AG04450 (cell line): ENCODE measurements at regions of chrX and their contacts with region 1.

Region 1: GRCh38 chrX:153507484-153508178 is 9.8 kb upstream of the ATP2B3 start:
- DNase-seq: peak; percentile 30
- H3K4me3 ChIP-seq: no peak overlapping the region
- H3K27ac ChIP-seq: no peak overlapping the region
- H3K27me3 ChIP-seq: no peaks in the 10 kb centered on the region
- CTCF ChIP-seq: peak; percentile 65

Region 2: GRCh38 chrX:153032397-153033118 is 475.1 kb before region 1 on chrX:
- CTCF ChIA-PET with region 1: interaction called, 14 read pairs
- POLR2A ChIA-PET with region 1: no interaction called
- DNase-seq: no peak
- H3K4me3 ChIP-seq: peak overlapping the region; percentile 13; the same call in 1 of the 2 replicates
- H3K27ac ChIP-seq: no peak overlapping the region
- H3K27me3 ChIP-seq: no peaks in the 10 kb centered on the region
- CTCF ChIP-seq: peak; percentile 66

Region 3: GRCh38 chrX:153438531-153438930 is 69.1 kb before region 1 on chrX:
- CTCF ChIA-PET with region 1: no interaction called
- POLR2A ChIA-PET with region 1: no interaction called
- DNase-seq: no peak
- H3K4me3 ChIP-seq: no peak overlapping the region
- H3K27ac ChIP-seq: no peak overlapping the region
- H3K27me3 ChIP-seq: no peaks in the 10 kb centered on the region
- CTCF ChIP-seq: peak; percentile 46

Region 4: GRCh38 chrX:153460845-153461244 is 46.8 kb before region 1 on chrX:
- CTCF ChIA-PET with region 1: interaction called, 45 read pairs
- POLR2A ChIA-PET with region 1: no interaction called
- DNase-seq: no peak
- H3K4me3 ChIP-seq: no peak overlapping the region
- H3K27ac ChIP-seq: no peak overlapping the region
- H3K27me3 ChIP-seq: no peaks in the 10 kb centered on the region
- CTCF ChIP-seq: peak; percentile 63

Region 5: GRCh38 chrX:153470435-153471363 is 36.9 kb before region 1 on chrX and contains the start of gene HAUS7:
- CTCF ChIA-PET with region 1: interaction called, 62 read pairs
- POLR2A ChIA-PET with region 1: interaction called, 4 read pairs
- DNase-seq: peak; percentile 70
- H3K4me3 ChIP-seq: peak within 1 kb of the TSS; percentile 67
- H3K27ac ChIP-seq: no peak within 1 kb of the TSS
- H3K27me3 ChIP-seq: no peaks in the 10 kb centered on the region
- CTCF ChIP-seq: peak; percentile 69
- polyA plus RNA-seq, gene HAUS7: 13.2 and 16.5 TPM in 2 replicates

Region 6: GRCh38 chrX:153494541-153495361 is 12.9 kb before region 1 on chrX and contains the start of gene BGN:
- CTCF ChIA-PET with region 1: interaction called, 21 read pairs
- POLR2A ChIA-PET with region 1: no interaction called
- DNase-seq: no peak
- H3K4me3 ChIP-seq: peak within 1 kb of the TSS; percentile 73
- H3K27ac ChIP-seq: peak within 1 kb of the TSS; percentile 31
- H3K27me3 ChIP-seq: no peaks in the 10 kb centered on the region
- CTCF ChIP-seq: peak; percentile 45
- polyA plus RNA-seq, gene BGN: 97.2 and 143 TPM in 2 replicates